Posterior cingulate gyrus (tissue), 11 donors: ENCODE measurements at regions of chr1 and their contacts with region 1.

Region 1: GRCh38 chr1:17059739-17060460 is 6.1 kb upstream of the SDHB start:
- DNase-seq: peak; percentile 48 to 97 (median 78)

Region 2: GRCh38 chr1:16464903-16465625 is 594.8 kb before region 1 on chr1:
- intact Hi-C with region 1: no loop called
- DNase-seq: no peak

Region 3: DNA sequence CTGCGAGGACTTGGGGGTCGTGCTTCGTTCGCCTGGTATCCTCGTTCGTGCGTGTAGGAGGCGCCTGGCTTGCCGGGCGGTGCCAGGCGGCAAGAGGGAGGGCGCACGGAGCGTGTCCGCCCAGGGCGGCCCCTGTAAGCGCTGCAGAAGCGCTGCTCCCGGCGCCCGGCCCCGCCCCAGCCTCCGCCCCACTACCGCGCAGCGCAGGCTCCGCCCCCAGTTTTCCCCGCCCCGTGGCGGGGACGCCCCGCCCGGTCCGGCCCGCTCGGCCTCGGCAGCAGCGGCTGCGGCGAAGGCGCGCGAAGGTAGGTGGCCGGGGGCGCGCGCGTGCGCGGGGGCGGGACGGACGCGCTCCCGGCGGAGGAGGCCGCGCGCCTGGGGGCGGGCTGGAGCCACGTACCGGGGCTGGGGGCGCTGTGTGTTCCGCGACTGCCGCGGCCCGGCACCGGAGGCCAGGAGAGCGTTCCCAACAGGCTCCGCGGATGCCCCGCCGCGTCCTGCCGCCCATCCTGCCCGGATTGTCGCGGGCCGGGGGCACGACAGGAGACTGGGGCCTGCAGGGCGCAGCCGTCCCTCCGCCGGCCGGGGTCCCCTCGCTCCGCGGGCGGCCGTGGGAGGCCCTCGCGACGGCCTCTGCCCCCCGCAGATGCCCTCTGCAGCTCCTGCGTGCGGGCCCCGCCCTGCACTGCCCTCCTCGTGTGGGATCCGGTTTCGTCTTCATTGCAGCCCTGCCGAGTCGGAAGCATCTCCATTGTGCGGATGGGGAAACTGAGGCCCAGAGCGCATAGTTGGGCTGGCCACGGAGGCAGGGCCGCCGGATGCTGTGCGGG is 145.9 kb before region 1 on chr1:
- intact Hi-C with region 1: no loop called
- DNase-seq: peak; percentile 82 to 100 (median 98)

Region 4: GRCh38 chr1:16984717-16985116 is 75.2 kb before region 1 on chr1:
- intact Hi-C with region 1: no loop called
- DNase-seq: peak in 6 of 10 donors; percentile 24 to 90 (median 65)

Region 5: GRCh38 chr1:17109892-17110554 is 50.1 kb after region 1 on chr1:
- intact Hi-C with region 1: no loop called
- DNase-seq: peak in 9 of 10 donors; percentile 48 to 96 (median 72)

Region 6: DNA sequence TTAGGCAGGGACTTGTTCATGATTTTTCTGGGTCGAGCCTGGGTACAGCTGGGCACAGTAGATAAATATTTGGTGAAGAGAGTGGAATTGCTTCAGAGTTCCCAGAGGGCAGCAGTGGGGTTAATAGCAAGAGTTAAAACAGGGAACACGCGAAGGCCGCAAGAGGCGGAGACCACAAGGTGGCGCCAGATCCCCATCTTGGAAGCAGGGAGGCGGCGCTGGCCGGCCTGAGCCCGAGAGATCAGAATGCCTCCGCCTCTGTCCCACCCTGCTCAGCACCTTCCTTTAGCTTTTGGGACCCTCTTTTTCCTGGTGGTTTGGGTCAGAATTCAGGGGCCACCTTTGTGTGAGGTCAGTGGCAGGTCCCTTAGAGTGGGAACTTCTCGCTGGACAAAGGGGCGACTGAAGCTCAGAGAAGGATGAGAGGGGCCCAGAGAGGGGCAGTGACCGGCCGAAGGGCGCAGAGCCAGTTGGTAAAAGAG is 65.9 kb after region 1 on chr1:
- intact Hi-C with region 1: loop called (anchors 2 kb)
- DNase-seq: peak; percentile 70 to 98 (median 92)

Region 7: DNA sequence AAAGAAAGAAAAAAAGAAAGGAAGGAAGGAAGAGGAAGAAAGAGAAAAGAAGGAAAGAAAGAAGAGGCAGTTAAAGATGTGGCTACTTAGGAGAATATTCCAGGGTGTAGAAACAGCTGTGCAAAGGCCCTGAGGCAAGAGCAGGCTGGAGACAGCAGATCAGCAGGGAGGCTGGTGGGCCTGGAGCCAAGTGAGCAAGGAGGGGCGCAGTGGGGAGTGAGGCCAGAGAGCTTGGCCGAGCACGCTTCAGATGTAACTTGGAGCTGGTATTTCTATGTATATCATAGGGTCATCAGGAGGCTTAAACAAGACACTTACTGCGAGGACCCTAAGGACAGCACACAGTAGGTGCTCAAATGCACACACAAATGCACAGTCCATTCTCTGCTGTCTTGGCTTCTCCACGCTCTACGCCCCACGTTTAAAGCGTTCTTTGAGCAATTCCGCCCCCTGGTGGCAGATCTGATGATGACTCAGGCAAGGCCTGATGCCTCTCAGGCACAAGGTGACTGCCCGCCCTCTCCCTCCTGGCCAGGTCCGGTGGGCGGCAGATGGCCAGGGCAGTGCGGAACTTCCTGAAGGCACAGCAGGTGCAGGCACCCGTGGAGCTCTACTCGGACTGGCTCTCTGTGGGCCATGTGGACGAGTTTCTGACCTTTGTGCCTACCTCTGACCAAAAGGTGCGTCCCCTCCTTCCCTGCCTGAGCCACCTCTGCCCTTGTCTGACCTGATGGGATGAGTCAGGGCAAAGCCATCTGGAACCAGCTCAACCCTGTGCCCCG is 177.1 kb after region 1 on chr1:
- intact Hi-C with region 1: loop called (anchors 1 kb)
- DNase-seq: peak; percentile 70 to 97 (median 92)

Region 8: DNA sequence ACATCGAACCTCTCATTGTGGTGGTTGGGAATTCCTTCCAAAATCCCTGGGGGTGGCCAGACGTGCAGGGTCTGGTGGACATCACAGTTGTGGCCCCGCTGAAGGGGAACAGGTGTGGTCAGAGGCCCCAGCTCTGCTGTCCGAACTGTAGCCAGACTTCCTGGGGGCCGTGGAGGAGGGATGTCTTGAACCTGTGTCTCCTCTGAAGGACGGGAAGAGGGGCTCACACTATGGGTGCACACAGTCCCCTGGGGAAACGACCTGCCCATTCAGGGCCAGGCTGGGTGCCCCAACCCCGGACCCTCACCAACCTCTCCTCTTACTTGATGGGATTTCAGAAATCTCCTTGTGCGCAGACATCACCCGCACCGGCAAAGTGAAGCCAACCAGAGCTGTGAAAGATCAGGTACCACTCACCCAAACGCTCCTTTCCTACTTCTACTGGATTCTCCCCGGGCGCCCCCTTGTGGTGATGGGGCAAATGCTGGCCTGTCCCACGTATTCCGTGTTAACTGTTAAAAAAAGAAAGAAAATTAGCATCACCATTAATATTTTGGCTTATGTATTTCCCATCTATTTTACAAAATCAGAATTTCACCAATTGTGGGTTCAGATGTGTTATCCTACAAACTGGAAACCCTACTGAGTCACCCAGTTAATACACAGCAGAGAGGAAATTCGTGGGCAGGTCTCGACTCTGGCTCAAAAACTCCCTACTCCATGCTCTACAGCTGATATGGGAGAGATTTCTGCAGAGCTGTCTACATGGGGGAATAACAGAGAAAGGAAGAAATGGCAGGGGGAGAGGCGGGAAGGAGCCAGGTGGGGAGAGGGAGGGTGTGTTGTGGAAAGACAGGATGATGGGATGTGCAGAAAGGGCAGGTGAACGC is 276.2 kb after region 1 on chr1:
- intact Hi-C with region 1: loop called (anchors 10 kb)
- DNase-seq: peak in 9 of 10 donors; percentile 18 to 89 (median 67)

Region 9: DNA sequence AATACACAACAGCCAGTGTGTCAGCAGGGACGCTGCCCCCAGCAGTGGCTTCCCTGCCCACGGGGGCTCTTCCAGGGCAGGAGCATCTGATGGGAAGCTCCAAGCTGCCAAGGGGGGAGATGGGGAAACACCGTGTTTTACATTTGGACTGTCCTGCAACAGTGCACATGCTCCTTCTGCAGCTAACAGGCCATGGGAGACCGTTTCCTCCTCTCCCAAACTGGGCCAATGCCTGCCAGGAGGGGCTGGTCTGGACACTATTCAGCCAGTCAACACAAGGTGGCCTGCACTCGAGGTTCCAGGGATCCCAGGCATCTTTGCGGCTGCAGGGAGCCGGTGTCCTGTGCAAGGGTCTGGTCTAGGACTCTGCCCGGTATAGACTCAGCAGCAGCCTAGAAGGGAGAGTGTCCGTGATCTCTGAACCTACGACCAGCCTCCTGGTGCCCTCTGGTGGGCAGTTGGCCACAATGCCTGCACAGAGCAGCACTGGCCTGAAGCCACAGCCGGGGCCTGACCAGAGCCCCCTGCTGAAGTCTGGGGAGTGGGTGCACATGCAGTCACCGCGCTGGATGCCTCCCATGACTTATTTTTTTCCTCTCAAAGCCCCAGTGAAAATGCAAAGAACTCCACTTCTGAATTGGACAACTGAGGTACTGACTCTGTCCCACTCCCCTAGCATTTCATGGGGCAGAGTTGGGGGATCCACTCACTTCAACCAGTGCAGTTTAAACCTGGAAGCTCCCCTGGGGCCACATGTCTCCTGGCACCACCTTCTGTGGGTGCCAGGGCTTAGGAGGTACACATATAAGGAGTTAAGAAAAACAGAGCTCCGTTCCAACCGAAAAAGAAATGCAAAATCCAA is 346.2 kb after region 1 on chr1:
- intact Hi-C with region 1: loop called (anchors 10 kb)
- DNase-seq: peak; percentile 29 to 94 (median 66)

Region 10: DNA sequence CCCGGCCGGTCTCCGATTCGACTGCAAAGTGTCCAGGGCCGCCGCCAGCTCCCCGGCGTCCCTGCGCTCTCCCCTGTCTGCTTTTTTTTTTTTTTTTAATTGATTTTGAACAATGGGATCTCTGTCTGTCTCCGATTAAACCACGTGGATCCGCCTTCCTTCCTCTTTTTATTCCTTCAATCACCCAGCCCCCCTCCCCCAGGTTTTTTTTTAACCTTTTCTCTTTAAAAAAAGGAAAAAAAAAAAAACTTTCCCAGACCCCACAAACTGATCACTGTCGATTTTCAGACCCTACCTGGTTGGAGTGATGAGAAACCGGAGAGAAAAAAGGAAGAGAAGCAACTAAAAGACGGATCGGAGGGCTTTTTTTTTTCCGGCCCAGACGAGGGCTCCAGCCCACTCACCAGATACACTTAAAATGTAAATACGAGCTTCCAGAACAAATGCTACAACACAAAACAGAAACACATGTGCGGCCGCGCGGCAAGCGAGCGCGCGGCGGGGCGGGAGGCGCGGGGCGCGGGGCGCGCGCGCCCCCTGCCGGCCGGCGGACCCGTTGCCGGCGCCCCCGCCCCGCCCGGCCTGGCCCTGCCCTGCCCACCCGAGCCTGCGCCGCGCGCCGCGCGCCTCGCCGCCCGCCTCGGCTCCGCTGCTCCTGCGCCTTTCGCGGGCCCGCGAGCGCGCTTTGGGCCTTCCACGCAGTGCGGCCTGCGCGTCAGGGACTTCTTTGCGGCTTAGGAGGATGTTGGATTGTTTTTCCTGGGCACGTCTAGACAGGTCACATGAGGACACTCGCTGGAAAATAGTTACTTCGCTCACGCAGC is 379.6 kb after region 1 on chr1 and contains the start of gene RCC2:
- intact Hi-C with region 1: loop called (anchors 5 kb)
- DNase-seq: peak; percentile 25 to 96 (median 69)